Transverse colon (tissue), 4 donors: ENCODE measurements at regions of chr1 and their contacts with region 1.

Region 1: GRCh38 chr1:205430696-205431305 is 8.9 kb upstream of the LEMD1 start:
- DNase-seq: peak; percentile 71
- H3K4me3 ChIP-seq: peak overlapping the region; percentile 21 to 52 (median 42)
- H3K27ac ChIP-seq: no peak overlapping the region
- H3K4me1 ChIP-seq: peaks cover 4 to 22% (median 12%) of the 10 kb centered on the region in 4 donors
- H3K27me3 ChIP-seq: peaks cover 6% of the 10 kb centered on the region
- CTCF ChIP-seq: peak; percentile 72 to 83 (median 75)
- EP300 ChIP-seq: no peak
- POLR2A ChIP-seq: no peak

Region 2: DNA sequence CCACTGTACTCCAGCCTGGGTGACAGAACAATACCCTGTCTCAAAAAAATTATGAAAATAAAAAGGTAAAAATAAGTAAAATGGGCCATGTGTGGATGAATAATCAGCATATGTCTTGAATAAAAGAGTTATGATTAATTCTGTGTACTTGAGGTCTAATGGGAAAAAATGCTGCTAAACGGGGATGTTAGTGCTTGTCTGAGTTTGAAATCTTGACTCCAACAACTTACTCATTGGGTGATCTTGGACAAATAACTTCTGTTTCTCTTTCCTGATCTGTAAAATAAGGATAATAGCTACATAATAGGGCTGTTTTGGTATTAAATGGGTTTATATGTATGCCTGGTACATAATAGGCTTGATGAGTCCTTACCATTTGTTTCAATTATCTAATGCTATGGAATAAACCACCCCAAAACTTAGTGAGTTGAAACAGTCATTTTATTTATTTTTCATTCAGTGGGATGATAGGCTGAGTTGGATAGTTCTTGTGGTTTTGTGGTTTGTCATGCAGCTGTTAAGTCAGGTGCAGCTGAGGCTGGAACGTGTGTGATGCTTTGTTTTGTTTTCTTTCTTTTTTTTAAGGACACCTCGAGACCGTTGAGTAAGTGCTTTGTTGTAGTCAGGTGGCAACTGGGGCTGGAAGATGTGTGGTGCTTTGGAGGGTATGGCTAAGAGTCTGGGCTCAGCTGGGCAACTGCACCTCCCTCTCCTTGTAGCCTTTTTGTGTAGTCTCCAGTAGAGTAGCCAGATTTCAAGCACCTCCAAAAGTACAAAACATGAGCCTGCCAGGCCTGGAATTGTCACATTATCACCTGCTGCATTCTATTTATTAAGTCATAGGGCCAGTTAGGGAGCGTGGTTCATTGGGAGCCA is 909.7 kb before region 1 on chr1:
- in situ Hi-C with region 1: no loop called
- intact Hi-C with region 1: no loop called
- DNase-seq: peak; percentile 53
- H3K4me3 ChIP-seq: no peak overlapping the region
- H3K27ac ChIP-seq: peak overlapping the region; percentile 22 to 58 (median 38)
- H3K4me1 ChIP-seq: peaks cover 7 to 42% (median 19%) of the 10 kb centered on the region in 4 donors
- H3K27me3 ChIP-seq: no peaks in the 10 kb centered on the region
- CTCF ChIP-seq: no peak
- EP300 ChIP-seq: no peak
- POLR2A ChIP-seq: peak; percentile 17

Region 3: GRCh38 chr1:205144751-205145150 is 286.1 kb before region 1 on chr1:
- in situ Hi-C with region 1: no loop called
- intact Hi-C with region 1: no loop called
- DNase-seq: no peak
- H3K4me3 ChIP-seq: no peak overlapping the region
- H3K27ac ChIP-seq: no peak overlapping the region
- H3K4me1 ChIP-seq: peaks cover 0 to 9% (median 5%) of the 10 kb centered on the region in 4 donors
- H3K27me3 ChIP-seq: no peaks in the 10 kb centered on the region
- CTCF ChIP-seq: no peak
- EP300 ChIP-seq: no peak
- POLR2A ChIP-seq: no peak

Region 4: DNA sequence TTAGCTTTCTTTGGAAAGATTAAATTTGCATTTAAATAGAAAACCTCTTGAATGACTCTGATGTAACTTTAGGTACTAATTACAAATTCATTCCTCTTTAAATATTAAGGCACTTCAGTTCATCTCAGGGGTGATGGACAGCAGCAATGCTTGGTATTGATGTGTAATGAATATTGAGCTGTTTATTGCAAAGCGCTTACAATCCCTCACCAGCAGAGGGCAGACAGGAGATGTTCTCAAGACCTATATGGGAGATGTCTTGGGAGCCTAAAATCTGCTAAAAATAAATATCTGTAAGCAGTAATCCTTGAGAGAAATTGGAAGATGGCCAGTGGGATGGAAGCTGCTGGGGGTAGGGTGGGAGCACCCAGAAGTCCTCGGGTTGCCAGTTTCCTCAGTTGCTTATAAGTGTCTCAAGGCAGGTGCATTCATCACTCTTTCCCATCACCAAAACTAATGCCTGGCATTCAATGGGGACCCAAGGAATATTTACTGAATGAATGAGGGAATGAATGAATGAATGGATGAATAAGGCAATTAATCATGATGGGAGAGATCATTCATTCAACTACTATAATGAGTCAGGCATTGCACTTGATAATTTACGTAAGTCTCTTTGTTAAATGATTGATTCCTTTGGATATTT is 76.4 kb before region 1 on chr1:
- in situ Hi-C with region 1: no loop called
- intact Hi-C with region 1: loop called (anchors 10 kb)
- DNase-seq: peak; percentile 62
- H3K4me3 ChIP-seq: no peak overlapping the region
- H3K27ac ChIP-seq: peak overlapping the region; percentile 19 to 62 (median 40)
- H3K4me1 ChIP-seq: peaks cover 4 to 31% (median 12%) of the 10 kb centered on the region in 4 donors
- H3K27me3 ChIP-seq: no peaks in the 10 kb centered on the region
- CTCF ChIP-seq: peak; percentile 83 to 92 (median 87)
- EP300 ChIP-seq: no peak
- POLR2A ChIP-seq: no peak

Region 5: DNA sequence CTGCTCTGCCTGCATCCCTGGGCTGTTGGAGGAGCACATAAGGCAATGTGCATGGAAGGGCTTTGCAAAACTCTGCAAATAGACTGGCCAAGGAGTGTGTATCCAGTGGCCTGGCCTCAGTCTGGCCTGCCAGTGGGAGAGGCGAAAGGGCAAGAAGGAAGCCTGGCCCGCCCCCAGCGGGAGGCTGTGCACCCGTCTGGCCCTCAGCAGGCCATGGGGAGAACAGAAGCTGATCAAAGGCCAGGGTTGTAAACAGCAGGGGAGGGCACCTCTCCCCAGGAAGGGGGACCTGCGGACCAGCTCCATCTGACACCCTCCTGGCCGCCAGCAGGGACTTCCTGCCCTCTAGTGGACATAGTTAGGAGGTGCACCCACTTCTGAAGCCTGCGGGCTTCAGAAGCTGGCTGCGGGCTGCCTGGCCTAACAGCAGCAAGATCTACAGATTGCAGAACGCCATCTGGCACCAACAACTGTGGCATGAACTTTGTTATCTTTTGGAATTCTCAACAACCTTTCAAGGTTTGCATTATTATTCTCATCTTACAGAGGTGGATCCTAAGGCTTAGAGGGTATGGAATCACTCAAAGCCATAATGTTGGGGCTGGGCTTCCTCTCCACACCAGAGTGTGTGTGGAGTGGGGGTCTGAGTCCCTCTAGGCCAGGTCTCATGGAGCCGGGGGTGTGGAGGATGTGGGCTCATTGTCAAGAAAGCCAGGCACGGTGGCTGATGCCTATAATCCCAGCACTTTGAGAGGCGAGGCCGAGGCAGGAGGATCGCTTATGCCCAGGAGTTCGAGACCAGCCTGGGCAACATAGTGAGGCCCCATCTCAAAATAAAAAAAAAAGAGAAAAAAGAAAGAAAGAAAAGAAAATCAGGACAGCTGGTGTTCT is 54.8 kb after region 1 on chr1:
- in situ Hi-C with region 1: no loop called
- intact Hi-C with region 1: no loop called
- DNase-seq: peak; percentile 67
- H3K4me3 ChIP-seq: no peak overlapping the region
- H3K27ac ChIP-seq: no peak overlapping the region
- H3K4me1 ChIP-seq: peaks cover 0 to 7% (median 2%) of the 10 kb centered on the region in 4 donors
- H3K27me3 ChIP-seq: peaks cover 22% of the 10 kb centered on the region
- CTCF ChIP-seq: peak; percentile 90 to 98 (median 97)
- EP300 ChIP-seq: no peak
- POLR2A ChIP-seq: no peak

Region 6: DNA sequence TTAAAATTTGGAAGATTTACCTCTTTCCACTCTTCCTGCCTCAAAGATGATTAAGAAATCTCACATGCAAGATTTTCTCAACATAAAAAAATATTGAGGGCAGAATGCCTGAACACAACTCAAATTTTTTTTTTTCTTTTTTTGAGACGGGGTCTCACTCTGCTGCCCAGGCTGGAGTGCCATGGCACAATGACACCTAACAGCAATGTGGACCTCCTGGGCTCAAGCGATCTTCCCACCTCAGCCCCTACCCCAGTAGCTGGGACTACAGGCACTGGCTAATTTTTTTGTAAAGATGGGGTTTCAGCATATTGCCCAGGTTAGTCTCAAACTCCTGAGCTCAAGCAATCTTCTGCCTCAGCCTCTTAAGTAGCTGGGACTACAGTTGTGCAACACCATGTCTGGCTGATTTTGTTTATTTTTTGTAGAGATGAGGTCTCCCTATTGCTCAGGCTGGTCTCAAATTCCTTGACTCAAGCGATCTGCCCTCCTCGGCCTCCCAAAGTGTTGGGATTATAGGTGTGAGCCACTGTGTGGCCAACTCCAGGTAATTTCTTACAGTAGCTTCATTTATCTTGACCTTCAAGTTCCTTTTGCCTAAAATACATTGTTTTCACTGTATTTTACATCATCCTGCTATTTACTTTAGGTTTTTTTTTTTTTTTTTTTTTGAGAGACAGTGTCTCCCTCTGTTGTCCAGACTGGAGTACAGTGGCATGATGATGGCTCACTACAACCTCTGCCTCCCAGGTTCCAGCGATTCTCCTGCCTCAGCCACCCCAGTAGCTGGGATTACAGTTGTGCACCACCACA is 308.8 kb after region 1 on chr1:
- in situ Hi-C with region 1: no loop called
- intact Hi-C with region 1: no loop called
- DNase-seq: no peak
- H3K4me3 ChIP-seq: no peak overlapping the region
- H3K27ac ChIP-seq: no peak overlapping the region
- H3K4me1 ChIP-seq: peaks cover 4 to 45% (median 13%) of the 10 kb centered on the region in 4 donors
- H3K27me3 ChIP-seq: no peaks in the 10 kb centered on the region
- CTCF ChIP-seq: no peak
- EP300 ChIP-seq: no peak
- POLR2A ChIP-seq: no peak